ENCODE measurements at regions of chr3 and their contacts with region 1.

Region 1: DNA sequence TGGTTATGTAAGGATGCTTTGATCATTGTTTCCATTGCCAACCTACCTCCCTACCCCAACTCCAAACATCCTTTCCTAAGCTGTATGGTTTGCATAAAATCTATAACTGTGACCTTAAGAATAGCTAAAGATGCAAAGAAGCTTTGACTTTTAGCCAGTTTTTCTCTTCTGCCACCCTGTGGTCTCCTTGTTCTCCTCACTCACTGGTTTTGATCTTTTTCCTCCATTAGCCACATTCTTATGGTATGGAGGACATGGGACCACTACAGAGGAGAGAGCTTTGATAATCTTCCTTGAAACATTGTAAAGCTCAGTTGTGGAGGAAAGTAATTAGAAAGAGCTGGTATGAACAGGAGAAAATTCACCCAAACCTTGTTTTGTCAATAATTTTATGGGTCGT is 115.9 kb downstream of the NEK11 start:
- DNase-seq: no peak
- ATAC-seq: no peak

Region 2: DNA sequence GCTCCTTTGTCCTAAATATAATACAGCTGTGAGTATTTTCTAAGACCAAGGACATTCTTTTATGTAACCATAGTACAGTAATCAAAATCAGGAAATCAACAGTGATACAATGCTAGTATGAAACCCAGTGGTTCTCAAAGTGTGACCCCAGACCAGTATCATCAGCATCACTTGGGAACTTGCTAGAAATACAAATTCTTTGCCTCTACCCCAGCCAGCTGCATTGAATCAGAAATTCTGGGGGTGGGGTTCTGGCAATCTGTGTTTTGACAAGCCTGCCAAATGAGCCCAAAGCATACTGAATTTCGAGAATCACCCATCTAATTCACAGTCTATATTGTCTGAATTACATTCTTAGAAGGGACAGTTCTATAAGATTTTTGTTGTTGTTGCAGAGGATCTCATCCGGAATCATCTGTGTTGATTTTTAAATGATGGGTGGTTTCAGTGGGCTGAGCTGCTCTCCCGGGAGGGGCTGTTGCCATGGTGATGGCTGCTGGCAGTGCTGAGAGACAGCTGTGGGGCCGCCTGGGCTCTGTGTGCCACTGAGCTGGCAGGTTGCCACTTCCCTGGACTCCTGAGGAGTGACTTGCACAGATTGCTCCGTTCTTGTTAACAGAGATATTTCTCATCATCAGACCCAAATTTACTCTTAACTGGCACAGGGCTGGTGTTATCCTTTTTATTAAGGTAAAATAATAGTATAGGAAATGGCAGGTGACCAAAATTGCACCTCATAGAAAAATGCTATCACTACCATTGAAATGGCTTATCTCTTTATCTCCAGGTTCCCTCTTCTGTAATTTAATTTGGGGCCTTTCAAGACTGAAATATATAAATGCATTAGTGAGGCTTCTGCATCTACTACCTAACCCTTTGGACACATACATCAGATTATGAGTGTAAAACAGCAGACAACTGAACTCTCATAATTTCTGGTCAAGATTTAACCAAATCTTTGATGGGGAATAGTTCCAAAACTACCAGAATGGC is 59.4 kb before region 1 on chr3:
- intact Hi-C with region 1: loop called (anchors 10 kb)
- DNase-seq: no peak
- ATAC-seq: no peak

Region 3: GRCh38 chr3:131402391-131403039 is 259.9 kb after region 1 on chr3:
- intact Hi-C with region 1: no loop called
- DNase-seq: no peak
- ATAC-seq: no peak

Measured in Right ventricle myocardium inferior (tissue), 1 donor.